ENCODE measurements at regions of chr16 and their contacts with region 1.

Region 1: DNA sequence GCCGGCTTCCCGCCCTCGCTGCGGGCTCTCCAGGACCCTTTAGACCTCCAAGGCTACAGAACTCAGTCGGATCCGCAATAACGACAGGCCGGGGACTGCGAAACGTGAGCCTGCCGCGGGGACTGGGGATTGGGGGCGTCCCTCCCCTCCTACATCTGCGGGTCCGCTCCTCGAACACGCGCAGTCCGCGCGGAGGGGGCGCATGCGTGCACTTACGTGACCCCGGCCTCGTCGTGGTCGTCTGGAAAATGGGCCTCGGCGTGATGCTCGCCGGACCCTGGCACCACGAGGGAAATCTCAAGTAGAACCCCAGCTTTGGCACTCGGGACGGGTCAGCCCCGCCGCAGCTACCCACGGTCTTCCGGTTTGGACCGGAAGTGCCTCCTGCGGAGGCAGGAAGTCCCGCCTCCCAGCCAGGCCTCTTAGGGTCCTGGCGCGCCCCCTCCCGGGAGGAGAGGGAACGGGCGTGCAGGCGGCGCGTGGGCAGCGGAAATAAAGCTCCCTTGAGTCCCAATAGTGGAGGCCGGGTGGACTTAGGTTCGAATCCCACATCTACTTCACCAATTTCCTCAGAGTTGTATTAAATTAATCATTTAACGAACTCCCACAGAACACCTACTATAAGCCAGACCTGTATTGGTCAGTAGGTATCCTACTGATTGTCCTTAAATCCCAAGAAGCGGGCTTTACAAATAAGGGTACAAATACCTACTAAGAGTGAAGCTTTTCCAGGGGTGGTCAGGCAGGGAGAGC is at the start of gene TAF1C:
- DNase-seq: peak; percentile 92
- ATAC-seq: peak; percentile 96
- H3K4me3 Mint-ChIP-seq: peak within 1 kb of the TSS; percentile 95
- H3K27ac Mint-ChIP-seq: peak within 1 kb of the TSS; percentile 92
- H3K4me1 Mint-ChIP-seq: peaks cover 13% of the 10 kb centered on the region
- H3K27me3 Mint-ChIP-seq: no peaks in the 10 kb centered on the region
- total RNA-seq, gene TAF1C: 52.7 to 58.1 TPM

Region 2: DNA sequence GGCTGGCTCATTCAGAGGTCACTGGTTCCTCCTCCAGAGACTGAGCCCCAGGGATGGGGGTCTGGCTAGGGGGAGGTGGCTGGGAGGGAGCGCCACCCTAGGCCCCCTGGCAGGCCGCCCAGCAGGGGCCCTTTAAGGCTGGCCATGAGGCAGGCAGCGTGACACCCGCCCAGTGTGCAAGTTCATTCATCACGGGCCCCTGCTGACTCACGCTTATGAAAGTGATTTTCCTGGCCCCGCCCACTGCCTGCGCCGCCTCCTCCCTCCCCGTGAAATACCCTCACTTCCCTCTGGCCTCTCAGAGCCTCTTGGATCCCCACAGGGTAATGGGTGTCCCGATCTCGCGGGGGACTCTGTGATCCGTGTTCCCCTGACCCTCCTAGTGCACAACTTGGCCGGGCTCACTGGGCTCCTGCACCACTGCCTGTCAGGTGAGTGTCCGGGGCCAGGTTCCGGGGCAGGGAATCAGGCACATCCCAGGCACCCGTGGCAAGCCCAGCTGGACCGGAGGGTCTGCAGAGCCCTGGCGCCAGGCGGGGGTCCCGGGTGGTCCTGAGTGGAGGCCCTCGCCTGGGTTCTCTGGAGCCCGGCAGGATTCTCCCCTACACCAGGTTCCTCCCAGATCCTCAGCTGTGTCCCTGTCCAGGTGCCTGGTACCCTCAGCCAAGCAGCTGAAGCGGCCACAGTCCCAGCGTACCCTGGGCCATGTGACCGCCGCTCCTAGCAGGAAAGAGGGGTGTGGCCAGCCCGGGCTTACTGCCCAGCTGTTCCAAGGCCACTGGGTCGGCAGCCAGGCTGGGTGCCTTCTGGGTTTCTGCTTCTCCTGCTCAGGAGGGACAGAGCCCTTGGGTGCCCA is 233.7 kb before region 1 on chr16 and contains the start of gene OSGIN1:
- CTCF ChIA-PET with region 1: interaction called, 18 read pairs
- DNase-seq: peak; percentile 84
- ATAC-seq: peak; percentile 87
- H3K4me3 Mint-ChIP-seq: peak within 1 kb of the TSS; percentile 63
- H3K27ac Mint-ChIP-seq: no peak within 1 kb of the TSS
- H3K4me1 Mint-ChIP-seq: peaks cover 13% of the 10 kb centered on the region
- H3K27me3 Mint-ChIP-seq: peaks cover 11% of the 10 kb centered on the region
- total RNA-seq, gene OSGIN1: 0.21 to 0.93 TPM

Region 3: DNA sequence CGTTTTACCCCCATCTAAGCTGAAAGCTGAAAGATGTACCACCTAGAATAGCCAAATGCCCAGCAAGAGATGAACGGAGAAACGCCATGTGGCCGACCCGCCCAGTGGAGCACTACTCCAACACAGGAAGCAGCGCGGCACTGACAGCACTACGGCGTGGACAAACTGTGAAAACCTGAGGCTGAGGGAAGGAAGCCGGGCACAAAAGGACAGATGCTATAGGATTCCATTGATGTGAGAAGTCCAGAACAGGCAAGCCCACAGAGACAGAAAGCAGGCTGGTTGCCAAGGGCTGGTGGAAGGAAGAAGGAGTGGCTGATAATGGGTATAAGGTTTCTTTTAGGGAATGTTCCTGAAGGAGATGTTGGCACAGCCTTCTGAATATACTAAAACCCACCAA is 114.8 kb before region 1 on chr16:
- CTCF ChIA-PET with region 1: interaction called, 10 read pairs
- DNase-seq: no peak
- ATAC-seq: no peak
- H3K4me3 Mint-ChIP-seq: no peak overlapping the region
- H3K27ac Mint-ChIP-seq: no peak overlapping the region
- H3K4me1 Mint-ChIP-seq: peaks cover 3% of the 10 kb centered on the region
- H3K27me3 Mint-ChIP-seq: no peaks in the 10 kb centered on the region

Region 4: GRCh38 chr16:84116720-84117493 is 70.0 kb before region 1 on chr16 and contains the start of gene MBTPS1:
- CTCF ChIA-PET with region 1: interaction called, 29 read pairs
- DNase-seq: peak; percentile 98
- ATAC-seq: peak; percentile 94
- H3K4me3 Mint-ChIP-seq: peak within 1 kb of the TSS; percentile 88
- H3K27ac Mint-ChIP-seq: peak within 1 kb of the TSS; percentile 93
- H3K4me1 Mint-ChIP-seq: peaks cover 23% of the 10 kb centered on the region
- H3K27me3 Mint-ChIP-seq: no peaks in the 10 kb centered on the region
- total RNA-seq, gene MBTPS1: 56.1 to 57.8 TPM

Region 5: GRCh38 chr16:84144859-84145639 is 41.8 kb before region 1 on chr16 and contains the starts of genes DNAAF1 and HSDL1:
- CTCF ChIA-PET with region 1: interaction called, 14 read pairs
- DNase-seq: peak; percentile 93
- ATAC-seq: peak; percentile 91
- H3K4me3 Mint-ChIP-seq: peak within 1 kb of the TSS; percentile 90
- H3K27ac Mint-ChIP-seq: peak within 1 kb of the TSS; percentile 86
- H3K4me1 Mint-ChIP-seq: peaks cover 14% of the 10 kb centered on the region
- H3K27me3 Mint-ChIP-seq: peaks cover 12% of the 10 kb centered on the region
- total RNA-seq, gene DNAAF1: not detected
- total RNA-seq, gene HSDL1: 10.4 to 17.2 TPM

Region 6: GRCh38 chr16:84260766-84261554 is 74.1 kb after region 1 on chr16:
- CTCF ChIA-PET with region 1: no interaction called
- DNase-seq: no peak
- ATAC-seq: no peak
- H3K4me3 Mint-ChIP-seq: no peak overlapping the region
- H3K27ac Mint-ChIP-seq: no peak overlapping the region
- H3K4me1 Mint-ChIP-seq: no peaks in the 10 kb centered on the region
- H3K27me3 Mint-ChIP-seq: peaks cover 9% of the 10 kb centered on the region